Activated CD8-positive, alpha-beta T cell treated with anti-CD3 and anti-CD28 coated beads for 36 hours (primary cell): ENCODE measurements at regions of chr1 and their contacts with region 1.

Region 1: GRCh38 chr1:152640351-152640750 is 17.4 kb upstream of the LCE3A start:
- DNase-seq: no peak
- ATAC-seq: no peak
- H3K4me3 Mint-ChIP-seq: no peak overlapping the region
- H3K27ac Mint-ChIP-seq: no peak overlapping the region
- H3K4me1 Mint-ChIP-seq: no peaks in the 10 kb centered on the region
- H3K27me3 Mint-ChIP-seq: peaks cover 7% of the 10 kb centered on the region
- CTCF ChIP-seq: no peak

Region 2: DNA sequence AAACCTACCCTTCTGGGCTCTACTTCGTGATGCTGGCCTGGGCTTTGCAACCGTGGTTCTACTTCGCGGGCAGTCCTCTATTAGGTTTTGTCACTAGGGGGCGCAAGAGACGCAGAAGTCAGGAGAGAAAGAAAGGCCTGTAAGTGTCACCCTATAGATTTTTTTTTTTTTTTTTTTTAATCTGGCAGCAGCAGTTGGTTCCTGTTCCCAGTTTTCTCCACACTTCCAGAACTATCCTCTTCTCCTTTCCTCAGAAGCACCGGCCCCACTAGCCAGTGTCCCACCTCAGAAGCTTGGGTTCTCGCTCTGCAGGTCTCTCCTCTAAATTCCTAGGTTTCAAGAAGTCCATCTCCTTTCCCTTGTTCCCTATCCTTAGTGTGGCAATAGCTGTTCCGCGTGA is 13.8 kb after region 1 on chr1:
- CTCF ChIA-PET with region 1: interaction called, 41 read pairs
- POLR2A ChIA-PET with region 1: no interaction called
- intact Hi-C with region 1: no loop called
- DNase-seq: peak; percentile 70
- ATAC-seq: peak; percentile 45
- H3K4me3 Mint-ChIP-seq: no peak overlapping the region
- H3K27ac Mint-ChIP-seq: no peak overlapping the region
- H3K4me1 Mint-ChIP-seq: no peaks in the 10 kb centered on the region
- H3K27me3 Mint-ChIP-seq: peaks cover 4% of the 10 kb centered on the region
- CTCF ChIP-seq: peak; percentile 77